Transverse colon (tissue), 4 donors: ENCODE measurements at regions of chr4 and their contacts with region 1.

Region 1: GRCh38 chr4:142886546-142886945 is 40.4 kb upstream of the INPP4B start:
- DNase-seq: no peak
- H3K4me3 ChIP-seq: no peak overlapping the region
- H3K27ac ChIP-seq: no peak overlapping the region
- H3K4me1 ChIP-seq: no peaks in the 10 kb centered on the region
- H3K27me3 ChIP-seq: no peaks in the 10 kb centered on the region
- CTCF ChIP-seq: no peak
- EP300 ChIP-seq: no peak
- POLR2A ChIP-seq: no peak

Region 2: DNA sequence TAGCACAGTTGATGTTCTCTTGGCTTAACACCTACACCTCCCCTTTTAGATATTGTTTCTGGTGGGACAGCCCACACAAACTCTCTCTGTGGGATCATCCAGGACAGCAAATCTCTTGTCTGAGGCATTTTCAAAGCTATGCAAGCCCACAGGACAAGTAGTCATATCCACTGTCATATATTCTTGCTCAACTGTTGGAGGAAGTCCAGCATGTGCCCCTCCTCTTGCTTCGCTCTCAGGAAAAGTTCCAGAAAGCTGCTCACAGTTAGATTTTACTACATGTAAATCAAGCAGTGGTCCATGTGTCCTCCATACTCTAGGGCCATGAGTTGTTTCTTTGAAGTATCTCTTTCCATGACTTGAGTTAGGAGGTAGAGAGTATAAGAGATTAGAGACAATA is 301.1 kb before region 1 on chr4:
- in situ Hi-C with region 1: no loop called
- intact Hi-C with region 1: loop called (anchors 5 kb)
- DNase-seq: no peak
- H3K4me3 ChIP-seq: no peak overlapping the region
- H3K27ac ChIP-seq: no peak overlapping the region
- H3K4me1 ChIP-seq: no peaks in the 10 kb centered on the region
- H3K27me3 ChIP-seq: no peaks in the 10 kb centered on the region
- CTCF ChIP-seq: no peak
- EP300 ChIP-seq: no peak
- POLR2A ChIP-seq: no peak